H1 (cell line): ENCODE measurements at regions of chr5 and their contacts with region 1.

Region 1: GRCh38 chr5:141001854-141002604 is 35.8 kb downstream of the PCDHAC2 start:
- DNase-seq: peak; percentile 85 to 88
- H3K4me3 ChIP-seq: peak overlapping the region; percentile 35 to 65 (median 57); a peak in 7 of 8 replicates
- H3K27ac ChIP-seq: peak overlapping the region; percentile 88
- H3K4me1 ChIP-seq: peaks cover 8 to 39% (median 31%) of the 10 kb centered on the region in 4 experiments; a peak in 6 of 7 replicates
- H3K27me3 ChIP-seq: no peaks in the 10 kb centered on the region
- CTCF ChIP-seq: no peak
- EP300 ChIP-seq: peak in 1 of 2 experiments; percentile 96; a peak in 1 of 3 replicates
- POLR2A ChIP-seq: peak in 1 of 2 experiments; percentile 87; a peak in 2 of 3 replicates
- RAD21 ChIP-seq: peak in 1 of 2 experiments; percentile 12; a peak in 1 of 4 replicates

Region 2: GRCh38 chr5:140855772-140856674 is 146.0 kb before region 1 on chr5 and contains the start of gene PCDHA10:
- CTCF ChIA-PET with region 1: no interaction called
- POLR2A ChIA-PET with region 1: no interaction called
- DNase-seq: no peak
- H3K4me3 ChIP-seq: peak within 1 kb of the TSS; percentile 67 to 83 (median 72)
- H3K27ac ChIP-seq: no peak within 1 kb of the TSS; the same call in 1 of the 2 replicates
- H3K4me1 ChIP-seq: no peaks in the 10 kb centered on the region
- H3K27me3 ChIP-seq: no peaks in the 10 kb centered on the region
- CTCF ChIP-seq: peak in 2 of 3 experiments; percentile 40 to 47; a peak in 3 of 4 replicates
- EP300 ChIP-seq: no peak
- POLR2A ChIP-seq: no peak
- RAD21 ChIP-seq: peak; percentile 45 to 57; a peak in 3 of 4 replicates
- total RNA-seq, gene PCDHA10: 5.4 and 5.5 TPM in 2 replicates

Region 3: GRCh38 chr5:140988031-140988997 is 13.7 kb before region 1 on chr5:
- CTCF ChIA-PET with region 1: interaction called, 50 read pairs
- POLR2A ChIA-PET with region 1: interaction called, 155 read pairs
- DNase-seq: no peak
- H3K4me3 ChIP-seq: peak overlapping the region in 1 of 4 experiments; percentile 2; a peak in 2 of 8 replicates
- H3K27ac ChIP-seq: no peak overlapping the region
- H3K4me1 ChIP-seq: peaks cover 6 to 28% (median 13%) of the 10 kb centered on the region in 4 experiments; a peak in 6 of 7 replicates
- H3K27me3 ChIP-seq: no peaks in the 10 kb centered on the region
- CTCF ChIP-seq: no peak
- EP300 ChIP-seq: no peak
- POLR2A ChIP-seq: no peak
- RAD21 ChIP-seq: no peak

Region 4: DNA sequence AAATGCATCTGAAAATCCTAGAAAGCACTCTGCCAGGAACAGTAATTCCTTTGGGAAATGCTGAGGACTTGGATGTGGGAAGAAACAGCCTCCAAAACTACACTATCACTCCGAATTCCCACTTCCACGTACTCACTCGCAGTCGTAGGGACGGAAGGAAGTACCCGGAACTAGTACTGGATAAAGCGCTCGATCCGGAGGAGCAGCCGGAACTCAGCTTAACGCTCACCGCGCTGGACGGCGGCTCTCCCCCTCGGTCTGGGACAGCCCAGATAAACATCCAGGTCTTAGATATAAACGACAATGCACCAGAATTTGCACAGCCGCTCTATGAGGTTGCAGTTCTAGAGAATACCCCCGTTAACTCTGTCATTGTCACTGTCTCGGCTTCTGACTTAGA is 99.0 kb after region 1 on chr5:
- CTCF ChIA-PET with region 1: no interaction called
- POLR2A ChIA-PET with region 1: no interaction called
- DNase-seq: no peak
- H3K4me3 ChIP-seq: peak overlapping the region in 2 of 4 experiments; percentile 32 to 39; a peak in 2 of 8 replicates
- H3K27ac ChIP-seq: no peak overlapping the region
- H3K4me1 ChIP-seq: no peaks in the 10 kb centered on the region; a peak in 2 of 7 replicates
- H3K27me3 ChIP-seq: no peaks in the 10 kb centered on the region
- CTCF ChIP-seq: no peak
- EP300 ChIP-seq: no peak
- POLR2A ChIP-seq: no peak
- RAD21 ChIP-seq: no peak